HAP-1 (cell line): ENCODE measurements at regions of chr20 and their contacts with region 1.

Region 1: DNA sequence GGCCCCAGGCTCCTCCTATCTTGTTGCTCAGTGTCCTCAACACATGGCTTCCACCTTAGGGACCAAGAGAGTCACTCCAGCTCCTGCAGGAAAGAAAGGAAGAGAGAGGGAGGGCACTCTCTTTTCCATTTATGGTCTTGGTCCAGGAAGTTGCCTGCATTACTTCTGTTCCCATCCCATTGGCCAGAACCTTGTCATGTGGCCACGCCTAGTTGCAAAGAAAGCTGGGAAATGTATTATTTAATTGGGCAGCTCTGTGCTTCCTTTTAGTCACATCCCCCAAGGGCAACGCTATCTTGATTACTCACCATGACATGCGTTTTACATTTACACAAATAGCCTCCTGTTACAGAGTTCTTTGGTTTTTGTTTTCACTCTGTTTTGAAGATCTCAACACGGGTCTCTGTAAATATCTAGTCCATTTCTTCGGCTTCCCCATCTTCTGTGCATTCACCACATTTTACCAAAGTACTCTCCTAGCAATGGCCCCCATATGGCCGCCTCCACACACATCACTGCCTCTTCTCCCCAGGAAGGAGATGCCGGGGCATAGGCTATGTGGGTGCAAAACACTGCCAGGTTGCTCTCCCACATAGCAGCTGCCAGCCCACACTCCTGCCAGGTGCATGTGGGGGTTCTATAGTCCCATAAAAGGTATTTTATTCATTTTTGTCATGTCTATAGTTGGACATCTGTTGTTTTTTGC is 35.7 kb upstream of the ZMYND8 start:
- DNase-seq: peak; percentile 40 to 47
- H3K4me3 ChIP-seq: no peak overlapping the region
- H3K4me1 ChIP-seq: no peaks in the 10 kb centered on the region; the same call in 1 of the 2 replicates
- H3K27me3 ChIP-seq: no peaks in the 10 kb centered on the region

Region 2: GRCh38 chr20:46757754-46758678 is 634.2 kb before region 1 on chr20:
- in situ Hi-C with region 1: loop called (anchors 25 kb)
- DNase-seq: peak; percentile 15 to 72
- H3K4me3 ChIP-seq: no peak overlapping the region
- H3K4me1 ChIP-seq: no peaks in the 10 kb centered on the region
- H3K27me3 ChIP-seq: peaks cover 4% of the 10 kb centered on the region; the same call in 1 of the 2 replicates

Region 3: GRCh38 chr20:47196091-47197081 is 195.8 kb before region 1 on chr20:
- in situ Hi-C with region 1: loop called (anchors 5 kb)
- DNase-seq: peak; percentile 57 to 88
- H3K4me3 ChIP-seq: no peak overlapping the region
- H3K4me1 ChIP-seq: peaks cover 3% of the 10 kb centered on the region
- H3K27me3 ChIP-seq: no peaks in the 10 kb centered on the region

Region 4: DNA sequence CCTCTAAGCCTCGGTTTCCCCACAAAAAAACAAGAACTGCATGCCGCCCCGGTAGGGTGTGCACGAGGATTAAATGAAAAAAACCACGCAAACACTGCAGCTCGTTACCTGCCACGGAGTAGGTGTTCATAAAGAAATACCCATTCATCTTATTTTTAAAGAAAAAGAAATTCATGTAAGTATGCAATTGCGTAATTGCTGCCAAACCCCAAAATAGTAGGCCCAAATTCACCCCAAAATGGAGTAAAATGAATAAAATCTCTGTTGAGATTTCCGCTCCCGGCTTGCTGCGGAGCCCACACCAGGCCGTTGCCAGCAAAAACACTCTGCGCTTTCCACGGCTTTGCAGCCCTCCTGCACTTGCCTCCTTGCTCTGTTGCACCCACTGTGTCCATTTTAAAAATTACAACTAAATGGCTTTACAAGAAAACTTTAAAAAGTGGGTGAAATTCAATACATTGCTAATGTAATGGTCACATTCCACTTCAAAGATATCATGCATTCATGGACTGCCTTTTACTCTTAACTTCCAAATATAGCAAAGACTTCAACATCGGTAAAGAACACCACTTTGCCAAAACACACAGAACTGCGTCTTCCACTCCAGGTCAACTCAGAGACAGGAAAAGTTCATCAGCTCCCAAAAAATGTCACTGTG is 160.7 kb before region 1 on chr20:
- in situ Hi-C with region 1: no loop called
- DNase-seq: no peak
- H3K4me3 ChIP-seq: no peak overlapping the region
- H3K4me1 ChIP-seq: no peaks in the 10 kb centered on the region
- H3K27me3 ChIP-seq: no peaks in the 10 kb centered on the region

Region 5: GRCh38 chr20:47464380-47465101 is 72.4 kb after region 1 on chr20:
- in situ Hi-C with region 1: no loop called
- DNase-seq: no peak
- H3K4me3 ChIP-seq: no peak overlapping the region
- H3K4me1 ChIP-seq: no peaks in the 10 kb centered on the region
- H3K27me3 ChIP-seq: no peaks in the 10 kb centered on the region

Region 6: DNA sequence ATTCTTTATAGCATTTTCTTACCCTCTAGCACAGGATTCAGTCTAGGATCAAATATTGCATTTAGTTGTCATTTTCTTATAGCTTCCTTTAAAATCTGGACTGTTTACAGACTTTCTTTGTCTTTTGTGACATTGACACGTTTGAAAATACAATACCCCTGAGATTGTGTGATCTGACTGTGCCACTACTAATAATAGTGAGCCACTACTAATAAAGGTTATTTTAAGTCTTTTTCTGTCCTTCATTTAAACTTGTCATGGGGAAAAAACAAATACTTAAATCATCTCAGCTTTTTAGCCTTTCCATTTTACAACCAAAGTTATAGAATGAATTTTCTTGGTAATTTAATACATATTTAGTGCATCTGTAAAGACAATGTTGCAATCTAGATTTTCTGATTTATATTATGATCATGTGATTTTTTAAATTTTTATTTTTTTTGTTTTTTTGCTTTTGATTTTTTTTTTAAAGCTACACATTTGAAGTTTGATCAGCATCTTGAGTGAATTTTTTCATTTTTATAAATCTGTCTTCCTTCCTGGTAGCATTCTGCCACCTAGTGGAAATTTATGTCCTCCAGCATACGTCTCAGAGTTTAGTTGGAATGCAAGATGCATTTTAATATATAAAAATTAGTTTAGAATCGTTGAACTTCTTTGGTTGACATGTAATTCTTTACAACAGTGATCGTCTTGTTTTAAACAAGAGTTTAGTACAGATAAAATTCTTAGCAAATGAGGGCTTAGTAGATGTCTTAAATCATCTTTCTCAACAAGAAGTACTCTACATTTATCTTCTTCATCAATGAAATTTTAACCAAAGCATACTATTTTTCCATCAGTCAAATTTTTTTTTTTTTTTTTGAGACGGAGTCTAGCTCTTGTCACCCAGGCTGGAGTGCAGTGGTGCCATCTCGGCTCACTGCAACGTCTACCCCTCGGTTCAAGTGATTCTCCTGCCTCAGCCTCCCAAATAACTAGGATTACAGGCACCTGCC is 228.9 kb after region 1 on chr20:
- in situ Hi-C with region 1: loop called (anchors 25 kb)
- DNase-seq: peak; percentile 21 to 54
- H3K4me3 ChIP-seq: no peak overlapping the region
- H3K4me1 ChIP-seq: peaks cover 10% of the 10 kb centered on the region
- H3K27me3 ChIP-seq: no peaks in the 10 kb centered on the region

Region 7: DNA sequence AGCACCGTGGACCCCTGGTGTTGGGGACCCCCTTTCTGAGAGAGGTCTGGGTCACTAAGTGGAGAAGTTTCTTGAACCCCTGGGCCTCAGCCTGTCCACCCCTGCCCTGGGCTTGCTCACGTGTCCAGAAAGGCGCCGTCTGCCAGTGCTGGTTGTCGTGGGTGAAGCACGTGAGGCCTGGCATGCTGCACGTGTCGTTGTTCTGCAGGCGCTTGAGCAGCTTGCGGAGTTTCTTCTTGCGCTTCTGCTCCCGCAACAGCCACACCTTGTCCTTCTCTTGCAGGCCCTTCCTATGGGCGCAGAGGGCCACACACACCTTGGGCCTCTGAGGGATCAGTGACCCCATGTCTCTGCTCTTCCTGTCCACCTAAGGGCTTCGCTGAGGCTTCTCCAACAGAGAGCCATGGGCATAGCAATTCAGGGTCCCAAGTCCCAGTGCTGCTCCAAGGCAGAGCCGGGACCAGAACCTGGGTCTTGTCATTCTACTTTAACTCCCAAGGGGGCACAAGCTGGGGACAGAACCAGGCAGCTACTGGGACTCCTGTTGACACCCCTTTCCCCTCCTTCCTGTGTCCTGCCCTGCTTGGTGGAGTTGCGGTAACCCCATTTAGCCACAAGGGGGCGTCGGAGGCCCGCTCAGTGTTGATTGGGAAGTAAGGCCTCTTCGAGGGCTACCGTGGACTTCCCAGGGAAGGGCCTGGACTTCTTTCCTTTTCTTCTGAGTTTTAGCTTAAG is 271.3 kb after region 1 on chr20:
- in situ Hi-C with region 1: no loop called
- DNase-seq: peak; percentile 67 to 88
- H3K4me3 ChIP-seq: no peak overlapping the region
- H3K4me1 ChIP-seq: no peaks in the 10 kb centered on the region
- H3K27me3 ChIP-seq: no peaks in the 10 kb centered on the region